Esophagus muscularis mucosa (tissue), 4 donors: ENCODE measurements at regions of chr10 and their contacts with region 1.

Region 1: GRCh38 chr10:132654702-132655661 is 117.4 kb downstream of the INPP5A start:
- DNase-seq: no peak
- H3K4me3 ChIP-seq: no peak overlapping the region
- H3K27ac ChIP-seq: peak overlapping the region in 1 of 4 donors; percentile 22
- H3K4me1 ChIP-seq: peaks cover 0 to 51% (median 26%) of the 10 kb centered on the region in 4 donors
- H3K27me3 ChIP-seq: no peaks in the 10 kb centered on the region
- CTCF ChIP-seq: peak; percentile 85 to 91 (median 87)
- EP300 ChIP-seq: no peak
- POLR2A ChIP-seq: no peak

Region 2: DNA sequence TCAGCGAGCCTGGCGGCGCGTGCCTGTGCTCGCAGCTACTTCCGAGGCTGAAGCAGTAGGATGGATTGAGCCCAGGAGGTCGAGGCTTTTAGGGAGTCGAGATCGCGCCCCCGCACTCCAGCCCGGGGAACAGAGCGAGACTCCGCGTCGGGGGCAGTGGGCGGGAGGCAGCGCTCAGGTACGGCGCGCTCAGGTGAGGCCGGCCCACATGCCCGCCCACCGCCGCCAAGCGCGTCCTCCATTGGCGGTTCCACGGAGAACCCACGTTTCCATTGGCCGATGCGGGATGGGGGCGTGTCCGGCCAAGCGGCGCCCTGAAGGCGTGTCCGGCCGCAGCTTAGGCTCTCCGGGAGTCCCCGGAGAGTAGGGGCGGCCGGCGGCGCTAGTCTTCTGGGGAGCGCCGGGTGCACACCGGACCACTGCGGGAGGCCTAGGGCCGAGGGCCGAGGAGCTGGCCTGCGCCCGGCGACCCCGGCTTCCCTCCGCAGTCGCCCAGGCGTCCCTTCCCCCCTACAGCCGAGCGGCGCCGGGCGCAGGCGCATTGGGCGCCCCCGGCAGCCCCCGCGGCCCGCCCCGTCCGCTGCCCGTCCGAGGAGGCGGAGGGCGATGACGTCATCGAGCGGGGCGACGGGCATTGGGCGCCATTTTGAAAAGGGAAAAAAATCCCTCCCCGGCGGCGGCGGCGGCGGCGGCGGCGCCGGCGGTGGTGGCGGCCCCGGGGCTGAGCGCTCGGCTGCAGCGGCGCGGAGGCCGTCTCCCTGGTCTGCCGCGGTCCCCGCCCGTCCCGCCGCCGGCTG is 754.4 kb before region 1 on chr10 and contains the start of gene PPP2R2D:
- intact Hi-C with region 1: no loop called
- DNase-seq: peak; percentile 97
- H3K4me3 ChIP-seq: peak within 1 kb of the TSS; percentile 76 to 96 (median 88)
- H3K27ac ChIP-seq: peak within 1 kb of the TSS; percentile 92 to 98 (median 96)
- H3K4me1 ChIP-seq: peaks cover 40 to 49% (median 47%) of the 10 kb centered on the region in 4 donors
- H3K27me3 ChIP-seq: peaks cover 0 to 27% (median 6%) of the 10 kb centered on the region in 4 donors
- CTCF ChIP-seq: no peak
- EP300 ChIP-seq: no peak
- POLR2A ChIP-seq: no peak
- total RNA-seq, gene PPP2R2D: 38.2 to 49.7 (median 41.0) TPM

Region 3: GRCh38 chr10:132722394-132723329 is 67.7 kb after region 1 on chr10:
- intact Hi-C with region 1: loop called (anchors 5 kb)
- DNase-seq: no peak
- H3K4me3 ChIP-seq: peak overlapping the region in 3 of 4 donors; percentile 5 to 18 (median 8)
- H3K27ac ChIP-seq: peak overlapping the region; percentile 67 to 81 (median 74)
- H3K4me1 ChIP-seq: peaks cover 6 to 28% (median 24%) of the 10 kb centered on the region in 4 donors
- H3K27me3 ChIP-seq: no peaks in the 10 kb centered on the region
- CTCF ChIP-seq: no peak
- EP300 ChIP-seq: no peak
- POLR2A ChIP-seq: no peak

Region 4: DNA sequence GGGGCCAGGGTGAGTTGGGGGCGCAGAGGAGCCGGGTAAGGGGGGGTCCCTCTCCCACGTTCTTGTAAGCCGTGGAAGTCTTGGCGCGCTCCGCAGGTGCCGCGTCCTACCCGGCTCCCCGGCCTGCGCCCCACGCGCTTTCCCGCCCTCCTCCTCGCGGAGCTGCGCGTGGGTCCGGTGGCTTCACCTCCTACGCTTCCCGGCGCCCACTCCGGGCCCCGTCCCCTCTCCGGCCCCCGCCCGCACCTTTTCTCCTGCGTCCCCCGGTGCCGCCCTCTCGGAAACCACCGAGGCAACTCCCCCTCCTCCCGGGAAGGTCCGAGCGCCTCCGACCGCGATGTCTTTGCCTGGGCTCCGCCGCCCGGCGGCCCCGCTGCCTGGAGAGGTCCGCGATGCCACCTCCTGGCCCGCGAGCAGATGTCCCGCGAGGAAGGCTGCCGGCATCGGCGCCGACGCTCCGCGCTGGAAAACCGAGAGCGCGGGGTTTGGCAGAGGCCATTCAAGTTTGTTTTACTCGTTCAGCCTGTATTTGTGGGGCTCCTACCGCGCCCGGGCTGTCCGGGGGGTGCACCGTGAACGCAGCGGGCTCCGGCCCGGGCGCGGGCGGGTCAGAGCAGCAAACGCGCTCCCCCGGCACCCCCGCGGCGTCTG is 133.3 kb after region 1 on chr10:
- intact Hi-C with region 1: loop called (anchors 10 kb)
- DNase-seq: no peak
- H3K4me3 ChIP-seq: peak overlapping the region in 2 of 4 donors; percentile 18 to 34
- H3K27ac ChIP-seq: no peak overlapping the region
- H3K4me1 ChIP-seq: peaks cover 21 to 50% (median 45%) of the 10 kb centered on the region in 4 donors
- H3K27me3 ChIP-seq: peaks cover 0 to 88% (median 54%) of the 10 kb centered on the region in 4 donors
- CTCF ChIP-seq: peak in 1 of 3 experiments; percentile 27
- EP300 ChIP-seq: no peak
- POLR2A ChIP-seq: no peak